ENCODE measurements at regions of chr6 and their contacts with region 1.

Region 1: DNA sequence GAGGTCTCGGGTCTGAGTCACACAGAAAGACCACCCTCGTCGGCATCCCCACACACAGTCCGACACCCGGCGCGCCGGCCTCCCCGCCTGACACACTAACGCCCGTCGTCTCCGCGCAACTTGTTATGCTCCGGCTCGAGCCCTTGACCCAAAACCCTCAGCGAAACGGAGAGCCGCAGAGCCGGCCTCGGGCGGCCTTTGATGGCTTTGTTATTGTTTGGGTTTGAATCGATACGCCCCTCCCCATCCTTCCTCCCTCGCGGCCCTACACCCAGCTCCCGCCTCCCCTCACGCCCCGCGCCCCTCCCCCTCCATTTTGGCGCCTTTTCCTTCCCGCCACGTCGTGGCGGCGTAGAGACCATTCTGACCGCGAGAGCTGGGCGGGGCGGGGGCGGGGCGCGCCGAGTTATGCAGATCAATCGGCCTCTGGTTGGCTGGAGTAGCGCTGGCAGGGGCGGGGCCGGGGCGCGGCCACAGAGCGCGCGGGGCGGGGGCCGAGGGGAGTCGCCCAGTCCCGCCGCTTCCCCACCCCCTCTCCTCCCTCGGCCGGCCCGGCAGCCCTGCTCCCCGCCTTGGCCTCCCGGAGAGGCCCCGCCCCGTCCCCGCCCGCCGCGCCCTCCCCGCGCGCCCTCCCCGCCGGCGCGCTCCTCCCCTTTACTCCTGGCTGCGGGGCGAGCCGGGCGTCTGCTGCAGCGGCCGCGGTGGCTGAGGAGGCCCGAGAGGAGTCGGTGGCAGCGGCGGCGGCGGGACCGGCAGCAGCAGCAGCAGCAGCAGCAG is at the start of gene PIM1:
- DNase-seq: peak; percentile 99 to 100 (median 100)
- ATAC-seq: peak; percentile 90 to 96 (median 92)
- H3K4me3 ChIP-seq: peak within 1 kb of the TSS; percentile 61 to 100 (median 90)
- H3K27ac ChIP-seq: peak within 1 kb of the TSS; percentile 88 to 97 (median 93)
- H3K4me1 ChIP-seq: peaks cover 0 to 42% (median 17%) of the 10 kb centered on the region in 12 donors
- H3K27me3 ChIP-seq: no peaks in the 10 kb centered on the region
- CTCF ChIP-seq: peak in 1 of 12 donors; percentile 25
- POLR2A ChIP-seq: peak; percentile 68 to 95
- total RNA-seq, gene PIM1: 7.0 to 81.8 (median 16.0) TPM

Region 2: DNA sequence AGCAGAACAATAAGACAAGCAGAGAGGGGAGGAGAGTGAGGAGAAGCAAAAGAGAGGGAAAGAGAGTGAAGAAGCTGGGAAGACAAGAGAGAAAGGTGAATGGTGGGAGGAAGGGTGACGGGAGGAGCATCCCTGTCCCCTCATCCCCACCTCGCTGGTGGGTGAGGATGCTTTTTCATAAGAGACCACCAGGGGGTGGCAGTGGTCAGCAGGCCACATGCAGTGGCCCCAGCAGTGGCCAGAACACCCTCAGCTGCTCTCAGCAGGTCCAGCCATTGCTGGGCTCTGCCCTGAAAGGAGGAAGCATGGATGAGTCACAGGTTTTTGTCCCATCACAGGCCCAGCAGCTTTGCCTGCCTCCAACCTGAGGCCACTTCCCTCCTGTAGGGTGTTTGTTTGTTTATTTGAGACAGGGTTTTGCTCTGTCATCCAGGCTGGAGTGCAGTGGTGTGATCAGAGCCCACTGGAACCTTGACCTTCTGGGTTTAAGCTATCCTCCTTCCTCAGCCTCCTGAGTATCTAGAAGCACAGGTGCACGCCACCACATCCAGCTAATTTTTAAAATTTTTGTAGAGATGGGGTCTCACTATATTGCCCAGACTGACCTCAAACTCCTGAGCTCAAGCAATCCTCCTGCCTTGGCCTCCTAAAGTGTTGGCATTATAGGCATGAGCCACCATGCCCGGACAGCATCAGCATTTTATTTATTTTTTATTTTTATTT is 140.3 kb before region 1 on chr6:
- intact Hi-C with region 1: loop called in 7 of 10 experiments (anchors 1 to 10 kb)
- DNase-seq: peak; percentile 69 to 87 (median 82)
- ATAC-seq: peak; percentile 84 to 96 (median 95)
- H3K4me3 ChIP-seq: no peak overlapping the region
- H3K27ac ChIP-seq: peak overlapping the region in 1 of 12 donors; percentile 47
- H3K4me1 ChIP-seq: peaks cover 0 to 21% (median 0%) of the 10 kb centered on the region in 12 donors
- H3K27me3 ChIP-seq: no peaks in the 10 kb centered on the region
- CTCF ChIP-seq: peak; percentile 65 to 89 (median 78)
- POLR2A ChIP-seq: peak in 1 of 2 donors; percentile 16

Region 3: GRCh38 chr6:37102279-37103168 is 67.2 kb before region 1 on chr6:
- intact Hi-C with region 1: loop called in 7 of 10 experiments (anchors 1 to 10 kb)
- DNase-seq: peak; percentile 85 to 95 (median 90)
- ATAC-seq: peak; percentile 92 to 96 (median 95)
- H3K4me3 ChIP-seq: peak overlapping the region; percentile 2 to 64 (median 49)
- H3K27ac ChIP-seq: peak overlapping the region; percentile 57 to 93 (median 83)
- H3K4me1 ChIP-seq: peaks cover 8 to 37% (median 19%) of the 10 kb centered on the region in 12 donors
- H3K27me3 ChIP-seq: no peaks in the 10 kb centered on the region
- CTCF ChIP-seq: peak in 1 of 12 donors; percentile 29
- POLR2A ChIP-seq: peak in 1 of 2 donors; percentile 52

Region 4: DNA sequence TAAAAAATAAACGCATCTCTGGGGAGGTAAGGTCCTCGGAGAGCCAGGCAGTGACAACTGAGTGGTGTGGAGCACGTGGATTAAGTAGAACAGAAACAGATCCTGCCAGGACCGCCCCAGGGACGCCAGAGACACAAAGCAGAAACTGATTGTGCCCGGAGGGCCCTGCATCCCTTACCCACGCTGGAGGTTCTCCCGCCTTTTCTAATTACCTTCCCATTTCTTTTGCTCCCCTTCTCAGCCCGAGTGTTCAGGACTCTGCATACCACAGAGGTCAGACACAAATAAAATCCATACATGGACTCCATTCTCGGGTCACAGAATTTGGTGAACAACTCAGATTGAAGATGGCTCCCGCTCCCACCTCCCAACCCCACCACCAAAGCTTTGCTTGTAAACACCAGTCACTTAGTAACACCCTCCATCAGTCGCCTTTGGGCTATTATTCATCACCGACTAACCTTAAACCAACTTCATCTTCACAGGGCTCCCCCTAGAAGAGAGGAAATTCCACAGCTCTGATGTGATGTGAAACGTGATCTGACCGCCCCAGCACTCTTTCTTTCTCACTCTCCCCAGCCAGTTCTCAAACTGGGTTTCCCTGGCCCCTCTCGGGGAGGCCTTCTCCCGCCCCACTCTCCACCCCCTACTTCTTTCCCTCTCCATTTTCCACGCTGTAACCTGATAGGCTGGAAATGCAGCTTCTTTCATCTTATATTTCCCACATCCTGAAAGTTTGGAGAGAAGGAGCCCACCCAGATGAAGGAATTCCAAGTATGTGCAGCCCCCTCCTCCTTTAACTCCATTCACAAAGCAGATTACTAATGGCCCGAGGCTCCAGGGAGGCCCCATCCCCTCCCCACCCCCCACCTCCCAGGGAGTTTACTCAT is 32.2 kb before region 1 on chr6:
- intact Hi-C with region 1: loop called in 2 of 10 experiments (anchors 5 kb)
- DNase-seq: peak in 1 of 5 donors; percentile 33
- ATAC-seq: peak in 3 of 4 donors; percentile 56 to 69 (median 57)
- H3K4me3 ChIP-seq: no peak overlapping the region
- H3K27ac ChIP-seq: peak overlapping the region in 5 of 12 donors; percentile 12 to 91 (median 39)
- H3K4me1 ChIP-seq: peaks cover 0 to 48% (median 14%) of the 10 kb centered on the region in 12 donors
- H3K27me3 ChIP-seq: no peaks in the 10 kb centered on the region
- CTCF ChIP-seq: no peak
- POLR2A ChIP-seq: no peak

Region 5: GRCh38 chr6:37259191-37259590 is 89.5 kb after region 1 on chr6:
- intact Hi-C with region 1: no loop called
- DNase-seq: no peak
- ATAC-seq: no peak
- H3K4me3 ChIP-seq: peak overlapping the region in 3 of 12 donors; percentile 81 to 98 (median 87)
- H3K27ac ChIP-seq: peak overlapping the region in 3 of 12 donors; percentile 90 to 97 (median 95)
- H3K4me1 ChIP-seq: peaks cover 0 to 47% (median 21%) of the 10 kb centered on the region in 12 donors
- H3K27me3 ChIP-seq: no peaks in the 10 kb centered on the region
- CTCF ChIP-seq: no peak
- POLR2A ChIP-seq: no peak

Region 6: GRCh38 chr6:37643851-37644672 is 474.4 kb after region 1 on chr6:
- intact Hi-C with region 1: no loop called
- DNase-seq: peak in 3 of 5 donors; percentile 41 to 46 (median 46)
- ATAC-seq: peak; percentile 26 to 87 (median 43)
- H3K4me3 ChIP-seq: peak overlapping the region in 1 of 12 donors; percentile 20
- H3K27ac ChIP-seq: peak overlapping the region in 6 of 12 donors; percentile 42 to 72 (median 49)
- H3K4me1 ChIP-seq: peaks cover 0 to 15% (median 6%) of the 10 kb centered on the region in 12 donors
- H3K27me3 ChIP-seq: peaks cover 0 to 16% (median 8%) of the 10 kb centered on the region in 9 donors
- CTCF ChIP-seq: no peak
- POLR2A ChIP-seq: no peak

Region 7: GRCh38 chr6:37994238-37994637 is 824.6 kb after region 1 on chr6:
- intact Hi-C with region 1: no loop called
- DNase-seq: no peak
- ATAC-seq: no peak
- H3K4me3 ChIP-seq: no peak overlapping the region
- H3K27ac ChIP-seq: no peak overlapping the region
- H3K4me1 ChIP-seq: peaks cover 0 to 70% (median 33%) of the 10 kb centered on the region in 12 donors
- H3K27me3 ChIP-seq: no peaks in the 10 kb centered on the region
- CTCF ChIP-seq: no peak
- POLR2A ChIP-seq: no peak

Measured in heart left ventricle (tissue), 16 donors.